Endothelial cell of umbilical vein (primary cell): ENCODE measurements at regions of chr16 and their contacts with region 1.

Region 1: DNA sequence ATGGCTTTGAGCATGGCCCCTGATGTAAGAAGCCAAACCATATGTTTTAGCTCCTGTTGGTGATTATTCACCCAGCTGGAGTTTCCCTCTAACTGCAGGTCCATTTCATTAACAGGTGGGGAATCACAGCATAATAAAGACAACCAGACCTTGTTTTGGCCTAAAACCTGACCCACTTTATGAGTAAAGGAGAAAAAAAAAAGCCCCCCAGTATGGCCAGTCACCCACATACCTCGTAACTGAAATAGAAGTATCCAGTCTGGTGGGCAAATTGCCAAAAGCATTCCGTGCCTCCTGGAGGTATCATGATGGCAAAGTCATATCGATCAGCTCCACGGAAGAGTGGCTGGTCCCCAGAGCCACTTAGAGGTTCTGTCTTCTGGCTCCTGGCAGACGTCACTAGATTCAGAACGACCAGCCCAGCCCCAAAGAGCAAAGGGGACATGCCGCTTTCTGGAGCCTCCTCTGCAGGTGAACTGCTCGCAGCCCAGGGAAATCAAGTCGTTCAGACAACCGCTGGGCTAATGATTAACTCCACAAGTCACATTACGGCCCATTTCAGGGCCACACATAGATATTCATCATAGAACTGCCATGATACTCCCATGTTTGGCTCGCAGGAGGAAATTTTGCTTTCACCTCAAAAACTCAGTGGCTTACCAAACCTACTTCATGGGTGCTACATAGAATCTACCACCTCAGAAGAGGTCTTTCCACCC is at the start of gene TMED6:
- DNase-seq: no peak
- H3K4me3 ChIP-seq: no peak within 1 kb of the TSS
- H3K27ac ChIP-seq: no peak within 1 kb of the TSS
- H3K4me1 ChIP-seq: no peaks in the 10 kb centered on the region
- H3K27me3 ChIP-seq: no peaks in the 10 kb centered on the region
- CTCF ChIP-seq: no peak
- POLR2A ChIP-seq: no peak
- total RNA-seq, gene TMED6: 0.37 and 1.2 TPM in 2 replicates

Region 2: GRCh38 chr16:69253870-69254341 is 97.6 kb before region 1 on chr16:
- CTCF ChIA-PET with region 1: no interaction called
- POLR2A ChIA-PET with region 1: interaction called, 10 read pairs
- dilution Hi-C with region 1: no loop called
- intact Hi-C with region 1: no loop called
- DNase-seq: no peak
- H3K4me3 ChIP-seq: no peak overlapping the region
- H3K27ac ChIP-seq: no peak overlapping the region
- H3K4me1 ChIP-seq: no peaks in the 10 kb centered on the region
- H3K27me3 ChIP-seq: no peaks in the 10 kb centered on the region
- CTCF ChIP-seq: no peak
- POLR2A ChIP-seq: no peak